Naive thymus-derived CD4-positive, alpha-beta T cell (primary cell): ENCODE measurements at regions of chr7 and their contacts with region 1.

Region 1: GRCh38 chr7:158818325-158819213 is 10.7 kb downstream of the ESYT2 start:
- DNase-seq: peak; percentile 59 to 90 (median 83)
- ATAC-seq: peak; percentile 85
- H3K4me3 ChIP-seq: peak overlapping the region; percentile 59
- H3K4me3 Mint-ChIP-seq: peak overlapping the region; percentile 82 to 94 (median 87)
- H3K27ac ChIP-seq: peak overlapping the region; percentile 94
- H3K27ac Mint-ChIP-seq: peak overlapping the region; percentile 96 to 99 (median 98)
- H3K4me1 ChIP-seq: peaks cover 73 to 87% of the 10 kb centered on the region in 2 donors
- H3K4me1 Mint-ChIP-seq: peaks cover 75 to 97% (median 85%) of the 10 kb centered on the region in 7 donors
- H3K27me3 ChIP-seq: no peaks in the 10 kb centered on the region
- H3K27me3 Mint-ChIP-seq: no peaks in the 10 kb centered on the region

Region 2: GRCh38 chr7:158856883-158857668 is 38.5 kb after region 1 on chr7:
- CTCF ChIA-PET with region 1: no interaction called
- POLR2A ChIA-PET with region 1: interaction called, 3 read pairs
- intact Hi-C with region 1: loop called in 1 of 2 experiments (anchors 1 kb)
- DNase-seq: peak in 2 of 9 donors; percentile 15 to 17
- ATAC-seq: no peak
- H3K4me3 ChIP-seq: peak overlapping the region; percentile 77
- H3K4me3 Mint-ChIP-seq: peak overlapping the region; percentile 67 to 98 (median 94)
- H3K27ac ChIP-seq: peak overlapping the region; percentile 83
- H3K27ac Mint-ChIP-seq: peak overlapping the region in 8 of 9 donors; percentile 24 to 92 (median 84)
- H3K4me1 ChIP-seq: peaks cover 0 to 22% of the 10 kb centered on the region in 2 donors
- H3K4me1 Mint-ChIP-seq: peaks cover 15 to 46% (median 39%) of the 10 kb centered on the region in 7 donors
- H3K27me3 ChIP-seq: no peaks in the 10 kb centered on the region
- H3K27me3 Mint-ChIP-seq: peaks cover 0 to 4% (median 0%) of the 10 kb centered on the region in 5 donors

Region 3: GRCh38 chr7:158863611-158864506 is 45.3 kb after region 1 on chr7:
- CTCF ChIA-PET with region 1: no interaction called
- POLR2A ChIA-PET with region 1: interaction called, 8 read pairs
- intact Hi-C with region 1: loop called in 1 of 2 experiments (anchors 1 kb)
- DNase-seq: peak in 8 of 9 donors; percentile 23 to 50 (median 40)
- ATAC-seq: peak; percentile 77
- H3K4me3 ChIP-seq: peak overlapping the region; percentile 44
- H3K4me3 Mint-ChIP-seq: peak overlapping the region; percentile 86 to 98 (median 90)
- H3K27ac ChIP-seq: peak overlapping the region; percentile 62
- H3K27ac Mint-ChIP-seq: peak overlapping the region; percentile 85 to 98 (median 94)
- H3K4me1 ChIP-seq: peaks cover 0 to 22% of the 10 kb centered on the region in 2 donors
- H3K4me1 Mint-ChIP-seq: peaks cover 15 to 72% (median 62%) of the 10 kb centered on the region in 7 donors
- H3K27me3 ChIP-seq: no peaks in the 10 kb centered on the region
- H3K27me3 Mint-ChIP-seq: no peaks in the 10 kb centered on the region

Region 4: DNA sequence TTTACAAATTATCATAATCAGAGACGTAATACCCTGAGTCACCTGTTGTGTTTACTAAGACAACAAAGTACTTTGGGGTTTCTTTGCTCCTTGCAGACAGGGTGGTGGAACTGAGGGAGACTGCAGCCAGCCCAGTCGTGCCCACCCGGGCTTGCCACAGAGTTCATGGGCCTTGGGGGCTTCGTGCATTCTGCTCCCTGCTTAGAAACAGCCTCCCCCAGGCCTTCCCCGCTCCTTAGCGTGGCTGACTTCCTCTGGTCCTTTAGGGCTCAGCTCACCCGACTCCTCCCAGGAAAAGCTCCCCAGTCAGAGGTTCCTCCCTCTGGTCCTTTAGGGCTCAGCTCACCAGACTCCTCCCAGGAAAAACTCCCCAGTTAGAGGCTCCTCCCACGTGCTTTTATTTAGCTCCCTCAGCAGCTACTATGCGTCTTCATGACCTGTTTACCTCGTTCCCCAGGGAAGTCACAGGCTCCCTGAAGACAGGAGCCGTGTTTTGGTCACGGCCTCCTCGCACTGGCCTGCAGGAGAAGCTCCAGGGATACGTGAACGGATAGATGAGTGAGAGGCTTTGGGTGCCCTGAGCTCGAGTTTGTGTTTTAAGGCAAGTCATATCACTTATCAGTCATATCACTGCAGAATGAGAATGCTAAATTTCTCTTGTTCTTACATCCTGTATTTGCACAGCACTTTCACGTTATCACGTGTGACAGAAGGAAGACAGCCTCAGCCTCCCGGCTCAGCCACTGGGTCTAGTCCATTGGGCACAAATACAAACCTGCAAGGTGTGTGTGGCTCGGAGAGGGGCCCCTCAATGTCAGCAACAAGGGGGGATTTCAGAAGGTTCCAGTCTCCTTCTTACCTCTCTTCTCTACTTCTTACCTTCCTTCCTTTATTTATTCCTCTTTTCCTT is 378.8 kb after region 1 on chr7:
- CTCF ChIA-PET with region 1: no interaction called
- POLR2A ChIA-PET with region 1: no interaction called
- intact Hi-C with region 1: loop called in 1 of 2 experiments (anchors 5 kb)
- DNase-seq: peak in 7 of 9 donors; percentile 4 to 52 (median 38)
- ATAC-seq: peak; percentile 68
- H3K4me3 ChIP-seq: peak overlapping the region; percentile 31
- H3K4me3 Mint-ChIP-seq: peak overlapping the region; percentile 61 to 93 (median 85)
- H3K27ac ChIP-seq: peak overlapping the region; percentile 45
- H3K27ac Mint-ChIP-seq: peak overlapping the region; percentile 82 to 98 (median 93)
- H3K4me1 ChIP-seq: peaks cover 37 to 53% of the 10 kb centered on the region in 2 donors
- H3K4me1 Mint-ChIP-seq: peaks cover 24 to 54% (median 42%) of the 10 kb centered on the region in 7 donors
- H3K27me3 ChIP-seq: no peaks in the 10 kb centered on the region
- H3K27me3 Mint-ChIP-seq: no peaks in the 10 kb centered on the region